Transverse colon (tissue), 4 donors: ENCODE measurements at regions of chr19 and their contacts with region 1.

Region 1: GRCh38 chr19:47663841-47664771 is 49.1 kb upstream of the EHD2 start:
- DNase-seq: peak; percentile 69
- H3K4me3 ChIP-seq: no peak overlapping the region
- H3K27ac ChIP-seq: peak overlapping the region; percentile 76 to 93 (median 89)
- H3K4me1 ChIP-seq: peaks cover 63 to 82% (median 72%) of the 10 kb centered on the region in 4 donors
- H3K27me3 ChIP-seq: no peaks in the 10 kb centered on the region
- CTCF ChIP-seq: no peak
- EP300 ChIP-seq: peak; percentile 95
- POLR2A ChIP-seq: peak; percentile 18

Region 2: DNA sequence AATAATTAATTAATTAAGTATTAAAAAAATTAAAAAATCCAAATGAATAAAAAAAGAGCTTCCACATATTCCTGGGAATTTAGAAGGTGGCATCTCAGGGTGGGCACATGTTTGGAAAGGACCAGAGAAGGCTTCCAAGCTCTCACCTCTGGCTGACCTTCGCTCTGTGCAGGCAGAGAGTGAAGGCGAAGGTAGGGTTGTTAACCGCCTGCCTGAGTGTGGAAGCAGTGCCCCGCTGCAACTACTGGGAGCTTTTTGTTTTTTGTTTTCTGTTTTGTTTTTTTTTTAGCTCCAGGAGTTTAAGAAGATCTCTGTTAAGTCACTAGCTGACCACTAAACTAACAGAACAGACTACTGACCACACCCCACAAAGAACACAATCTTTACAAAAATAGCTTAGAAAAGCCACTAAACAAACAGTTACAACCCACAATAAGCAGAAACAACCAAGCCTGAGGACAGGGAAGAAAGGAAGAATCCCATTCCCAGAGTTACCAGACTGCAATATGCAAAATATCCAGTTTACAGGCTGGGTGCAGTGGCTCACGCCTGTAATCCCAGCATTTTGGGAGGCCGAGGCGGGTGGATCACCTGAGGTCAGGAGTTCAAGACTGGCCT is 102.6 kb before region 1 on chr19:
- in situ Hi-C with region 1: no loop called
- intact Hi-C with region 1: no loop called
- DNase-seq: no peak
- H3K4me3 ChIP-seq: no peak overlapping the region
- H3K27ac ChIP-seq: peak overlapping the region; percentile 62 to 73 (median 64)
- H3K4me1 ChIP-seq: peaks cover 0 to 37% (median 16%) of the 10 kb centered on the region in 4 donors
- H3K27me3 ChIP-seq: no peaks in the 10 kb centered on the region
- CTCF ChIP-seq: no peak
- EP300 ChIP-seq: no peak
- POLR2A ChIP-seq: no peak

Region 3: GRCh38 chr19:47608074-47608918 is 55.8 kb before region 1 on chr19:
- in situ Hi-C with region 1: no loop called
- intact Hi-C with region 1: loop called (anchors 2 kb)
- DNase-seq: peak; percentile 97
- H3K4me3 ChIP-seq: peak overlapping the region; percentile 81 to 97 (median 88)
- H3K27ac ChIP-seq: peak overlapping the region; percentile 97 to 98 (median 98)
- H3K4me1 ChIP-seq: peaks cover 22 to 40% (median 25%) of the 10 kb centered on the region in 4 donors
- H3K27me3 ChIP-seq: no peaks in the 10 kb centered on the region
- CTCF ChIP-seq: peak; percentile 31 to 74 (median 47)
- EP300 ChIP-seq: no peak
- POLR2A ChIP-seq: peak; percentile 80

Region 4: DNA sequence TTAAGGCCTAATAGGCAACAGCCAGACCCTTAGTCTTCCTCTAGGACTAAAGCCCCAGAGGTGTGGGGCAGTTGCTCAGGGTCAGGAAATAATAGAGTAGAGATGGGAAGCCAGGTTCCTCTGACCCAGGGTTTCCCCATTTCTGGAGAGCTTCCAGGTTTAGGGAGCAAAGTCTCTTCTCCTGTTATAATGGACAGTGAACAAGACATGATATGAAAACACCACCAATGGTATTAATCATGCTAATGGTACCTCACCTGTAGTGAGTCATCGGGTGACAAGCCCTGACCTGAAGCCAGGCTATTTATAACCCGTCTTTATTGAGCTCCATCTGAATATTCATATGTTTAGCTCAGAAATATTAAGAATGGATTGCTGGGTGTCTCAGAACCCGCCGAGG is 30.6 kb before region 1 on chr19:
- in situ Hi-C with region 1: no loop called
- intact Hi-C with region 1: loop called (anchors 5 kb)
- DNase-seq: no peak
- H3K4me3 ChIP-seq: no peak overlapping the region
- H3K27ac ChIP-seq: peak overlapping the region; percentile 66 to 86 (median 72)
- H3K4me1 ChIP-seq: peaks cover 12 to 64% (median 28%) of the 10 kb centered on the region in 4 donors
- H3K27me3 ChIP-seq: no peaks in the 10 kb centered on the region
- CTCF ChIP-seq: no peak
- EP300 ChIP-seq: no peak
- POLR2A ChIP-seq: no peak